ENCODE measurements at regions of chr1 and their contacts with region 1.

Region 1: GRCh38 chr1:71049951-71050598 is 2.5 kb upstream of the PTGER3 start:
- DNase-seq: peak; percentile 49
- H3K4me3 ChIP-seq: no peak overlapping the region
- H3K27ac ChIP-seq: no peak overlapping the region
- H3K4me1 ChIP-seq: peaks cover 13% of the 10 kb centered on the region
- H3K27me3 ChIP-seq: peaks cover 22% of the 10 kb centered on the region
- CTCF ChIP-seq: peak; percentile 72 to 81

Region 2: GRCh38 chr1:70034403-70034802 is 1015.7 kb before region 1 on chr1:
- CTCF ChIA-PET with region 1: no interaction called
- dilution Hi-C with region 1: no loop called
- in situ Hi-C with region 1: no loop called
- intact Hi-C with region 1: loop called (anchors 10 kb)
- DNase-seq: peak; percentile 43
- H3K4me3 ChIP-seq: no peak overlapping the region
- H3K27ac ChIP-seq: no peak overlapping the region
- H3K4me1 ChIP-seq: peaks cover 7% of the 10 kb centered on the region
- H3K27me3 ChIP-seq: no peaks in the 10 kb centered on the region
- CTCF ChIP-seq: peak; percentile 69

Region 3: GRCh38 chr1:70134148-70134547 is 915.9 kb before region 1 on chr1:
- CTCF ChIA-PET with region 1: no interaction called
- dilution Hi-C with region 1: no loop called
- in situ Hi-C with region 1: no loop called
- intact Hi-C with region 1: loop called (anchors 2 kb)
- DNase-seq: no peak
- H3K4me3 ChIP-seq: no peak overlapping the region
- H3K27ac ChIP-seq: no peak overlapping the region
- H3K4me1 ChIP-seq: no peaks in the 10 kb centered on the region
- H3K27me3 ChIP-seq: no peaks in the 10 kb centered on the region
- CTCF ChIP-seq: no peak

Region 4: GRCh38 chr1:70227439-70227838 is 822.6 kb before region 1 on chr1:
- CTCF ChIA-PET with region 1: no interaction called
- dilution Hi-C with region 1: no loop called
- in situ Hi-C with region 1: loop called (anchors 25 kb)
- intact Hi-C with region 1: no loop called
- DNase-seq: no peak
- H3K4me3 ChIP-seq: no peak overlapping the region
- H3K27ac ChIP-seq: no peak overlapping the region
- H3K4me1 ChIP-seq: peaks cover 7% of the 10 kb centered on the region
- H3K27me3 ChIP-seq: no peaks in the 10 kb centered on the region
- CTCF ChIP-seq: no peak

Region 5: DNA sequence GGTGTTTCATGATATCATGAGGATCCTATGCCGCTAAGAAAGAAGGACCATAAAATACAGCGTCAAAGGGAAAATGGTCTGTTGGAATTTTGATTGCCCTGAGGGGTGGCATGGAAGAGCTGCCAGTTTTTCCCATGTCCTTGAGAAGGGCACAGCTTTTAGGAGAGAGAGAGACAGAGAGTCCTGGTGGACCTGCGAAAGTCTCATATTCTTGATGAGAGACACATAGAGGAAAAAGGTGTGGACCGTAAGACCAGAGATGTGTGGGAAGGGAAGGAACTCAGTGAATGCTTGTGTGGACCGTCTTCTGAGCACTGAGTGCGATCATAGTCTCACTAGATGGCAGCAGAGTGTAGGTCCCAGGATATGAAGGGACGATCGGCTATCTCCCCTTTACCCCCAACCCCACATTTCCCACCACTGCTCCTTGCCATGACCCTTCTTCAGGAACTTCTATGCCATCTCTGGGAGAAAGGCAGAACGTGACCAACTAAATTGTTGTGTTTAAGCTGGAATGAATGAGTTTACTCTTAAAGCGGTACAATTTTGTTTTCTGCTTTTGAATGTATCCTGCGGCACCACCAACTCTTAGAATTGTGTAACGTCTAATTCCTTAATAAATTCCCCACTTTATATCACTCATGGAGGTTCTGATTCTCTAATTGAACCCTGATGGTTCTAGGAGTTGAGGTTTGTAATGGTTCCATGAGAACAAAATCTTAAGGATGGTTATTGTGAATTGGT is 521.3 kb before region 1 on chr1:
- CTCF ChIA-PET with region 1: no interaction called
- dilution Hi-C with region 1: no loop called
- in situ Hi-C with region 1: loop called (anchors 10 to 25 kb)
- intact Hi-C with region 1: loop called (anchors 1 kb)
- DNase-seq: peak; percentile 20
- H3K4me3 ChIP-seq: no peak overlapping the region
- H3K27ac ChIP-seq: no peak overlapping the region
- H3K4me1 ChIP-seq: no peaks in the 10 kb centered on the region
- H3K27me3 ChIP-seq: no peaks in the 10 kb centered on the region
- CTCF ChIP-seq: peak; percentile 47 to 72

Region 6: GRCh38 chr1:70685300-70686241 is 364.5 kb before region 1 on chr1:
- CTCF ChIA-PET with region 1: no interaction called
- dilution Hi-C with region 1: no loop called
- in situ Hi-C with region 1: loop called in 1 of 2 experiments (anchors 10 kb)
- intact Hi-C with region 1: loop called (anchors 1 kb)
- DNase-seq: peak; percentile 40
- H3K4me3 ChIP-seq: no peak overlapping the region
- H3K27ac ChIP-seq: no peak overlapping the region
- H3K4me1 ChIP-seq: no peaks in the 10 kb centered on the region
- H3K27me3 ChIP-seq: no peaks in the 10 kb centered on the region
- CTCF ChIP-seq: peak; percentile 89 to 95